Left lung (tissue), 14 donors: ENCODE measurements at regions of chr22 and their contacts with region 1.

Region 1: DNA sequence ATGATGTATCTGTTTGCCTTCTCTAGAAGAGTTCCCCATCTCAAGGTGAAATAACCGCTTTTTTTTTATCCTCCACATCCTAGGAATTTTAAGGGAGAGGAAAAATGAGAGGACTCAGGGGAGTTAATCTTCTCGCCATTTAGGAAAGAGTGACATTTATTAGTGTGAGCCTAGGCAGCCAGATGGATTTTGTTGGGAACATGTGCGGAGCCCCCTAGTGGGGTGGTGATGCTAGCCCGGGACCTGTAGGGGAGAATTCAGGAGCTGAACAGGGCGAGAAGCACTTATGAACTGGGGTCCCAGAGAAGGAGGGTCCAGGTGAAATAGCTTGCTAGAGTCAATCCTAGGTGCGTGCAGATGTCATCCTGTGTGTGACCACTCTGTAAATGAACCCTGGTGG is 10.7 kb downstream of the IL17RA start:
- DNase-seq: no peak
- ATAC-seq: no peak
- H3K4me3 ChIP-seq: no peak overlapping the region
- H3K27ac ChIP-seq: peak overlapping the region in 1 of 2 donors; percentile 85
- H3K4me1 ChIP-seq: peaks cover 0 to 95% of the 10 kb centered on the region in 2 donors
- H3K27me3 ChIP-seq: no peaks in the 10 kb centered on the region
- CTCF ChIP-seq: peak in 1 of 2 donors; percentile 8

Region 2: DNA sequence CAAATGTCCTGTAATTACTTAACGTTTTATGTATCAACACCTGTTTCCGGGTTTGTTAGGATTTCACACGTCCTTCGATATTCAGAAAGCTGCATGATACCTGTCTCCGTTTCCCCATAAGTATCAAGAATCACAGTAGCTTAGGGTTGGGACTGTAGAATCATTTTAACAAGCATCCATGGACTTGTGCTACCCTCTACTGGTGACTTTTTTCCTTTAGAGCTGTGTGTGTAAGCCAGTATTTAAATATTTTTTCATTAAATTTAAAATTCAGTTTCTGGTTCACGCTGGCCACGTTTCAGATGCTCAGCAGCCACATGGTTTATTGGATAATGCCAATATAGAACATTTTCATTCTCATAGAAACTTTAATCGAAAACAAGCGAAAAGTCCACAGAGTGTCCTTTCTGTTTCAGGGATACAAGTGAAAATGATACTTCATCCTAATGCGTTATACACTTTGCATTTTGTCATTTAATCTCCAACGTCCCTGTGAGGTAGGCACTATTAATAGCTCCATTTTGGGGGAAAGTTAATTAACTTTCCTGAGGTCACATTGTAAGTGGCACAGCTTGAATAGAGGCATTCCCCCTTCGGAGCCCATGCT is 406.2 kb after region 1 on chr22:
- intact Hi-C with region 1: loop called in 1 of 2 experiments (anchors 10 kb)
- DNase-seq: peak in 2 of 4 donors; percentile 56 to 75
- ATAC-seq: peak; percentile 94
- H3K4me3 ChIP-seq: no peak overlapping the region
- H3K27ac ChIP-seq: no peak overlapping the region
- H3K4me1 ChIP-seq: no peaks in the 10 kb centered on the region
- H3K27me3 ChIP-seq: no peaks in the 10 kb centered on the region
- CTCF ChIP-seq: peak; percentile 57 to 65